Lower leg skin (tissue), 4 donors: ENCODE measurements at regions of chr20 and their contacts with region 1.

Region 1: DNA sequence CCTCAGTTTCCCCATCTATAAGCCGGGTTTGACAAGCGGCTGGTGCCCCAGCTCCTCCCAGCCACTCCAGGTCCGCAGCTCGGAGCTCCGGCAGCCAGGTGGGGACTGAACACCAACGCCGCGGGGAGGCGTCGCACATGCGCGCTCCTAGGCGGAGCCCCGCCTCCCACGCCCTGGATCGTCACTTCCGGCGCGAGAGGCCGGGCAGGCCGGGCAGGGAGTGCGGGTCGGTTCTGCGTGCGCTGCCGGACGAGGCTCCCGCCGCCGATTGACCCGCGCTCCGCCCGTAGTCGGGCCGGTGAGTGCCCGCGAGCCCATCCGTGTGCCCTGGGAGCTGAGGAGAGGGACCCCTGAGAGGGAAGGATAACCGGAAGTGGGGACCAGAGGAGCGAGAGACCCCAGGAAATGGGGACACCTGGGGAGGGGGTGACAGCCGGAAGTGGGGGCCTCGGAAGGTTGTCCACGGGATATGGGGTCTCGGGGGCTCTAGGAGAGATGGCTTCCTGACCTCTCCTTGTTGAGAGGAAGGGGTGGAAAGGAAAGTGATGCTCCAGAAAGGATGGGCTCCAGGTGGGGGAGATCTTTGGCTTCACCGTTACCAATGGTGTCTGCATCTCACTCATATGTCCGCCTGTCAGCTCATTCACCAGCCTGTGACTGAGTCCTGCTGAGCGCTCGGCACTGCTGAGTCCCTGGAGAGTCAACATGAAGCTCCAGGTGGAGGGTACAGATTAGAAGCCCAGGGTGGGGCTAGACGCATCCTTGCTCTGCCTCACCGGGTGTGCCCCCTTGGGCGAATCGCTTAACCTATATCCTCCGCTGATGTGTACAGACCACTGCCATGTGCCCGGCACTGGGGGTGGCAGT is at the start of gene TTPAL:
- DNase-seq: peak; percentile 84 to 97
- H3K4me3 ChIP-seq: peak within 1 kb of the TSS; percentile 76
- CTCF ChIP-seq: no peak
- POLR2A ChIP-seq: peak in 1 of 2 donors; percentile 98
- total RNA-seq, gene TTPAL: 27.1 to 36.8 (median 31.7) TPM

Region 2: DNA sequence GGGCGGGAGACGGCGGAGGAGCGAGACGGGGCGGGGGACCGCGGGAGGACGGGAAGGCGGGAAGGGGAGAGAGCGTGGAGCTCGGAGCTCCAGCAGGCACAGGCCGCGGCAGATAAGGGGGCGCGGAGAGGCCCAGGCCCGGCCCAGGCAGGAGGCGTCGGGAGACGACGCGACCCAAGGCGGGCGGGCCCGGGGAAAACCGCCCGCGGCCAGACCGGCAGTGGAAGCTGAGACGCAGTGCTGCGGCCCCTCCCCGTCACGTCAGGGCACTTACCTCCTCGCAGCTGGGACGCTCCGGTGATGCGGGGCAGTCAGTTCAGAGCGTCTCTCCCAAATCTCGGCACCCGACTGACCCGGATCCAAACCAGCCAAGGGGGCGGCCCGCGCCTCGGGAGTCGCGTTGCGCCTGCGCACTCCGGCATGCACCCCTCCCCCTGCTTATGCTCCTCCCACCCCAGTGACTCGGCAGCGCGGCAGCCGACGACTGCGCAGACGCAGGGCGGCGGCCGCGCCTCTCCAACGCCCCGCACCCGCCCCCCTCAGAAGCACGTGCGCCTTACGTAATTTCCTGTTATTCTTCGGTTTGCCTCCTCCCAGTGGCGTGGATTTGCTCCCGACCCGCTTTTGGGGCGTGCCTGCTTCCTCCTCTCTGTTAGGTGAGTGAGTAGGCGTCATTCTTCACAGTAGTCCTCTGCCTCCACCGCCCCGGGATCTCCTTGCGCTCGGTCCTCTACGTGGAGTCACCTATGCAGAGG is 265.3 kb before region 1 on chr20 and contains the start of gene OSER1:
- intact Hi-C with region 1: loop called (anchors 10 kb)
- DNase-seq: peak; percentile 98 to 100
- H3K4me3 ChIP-seq: peak within 1 kb of the TSS; percentile 97
- CTCF ChIP-seq: no peak
- POLR2A ChIP-seq: peak in 1 of 2 donors; percentile 86
- total RNA-seq, gene OSER1: 41.2 to 49.6 (median 46.8) TPM